Activated CD8-positive, alpha-beta T cell treated with anti-CD3 and anti-CD28 coated beads for 36 hours (primary cell): ENCODE measurements at regions of chr3 and their contacts with region 1.

Region 1: GRCh38 chr3:66822186-66823008 is 175.7 kb upstream of the KBTBD8 start:
- DNase-seq: peak; percentile 73
- ATAC-seq: peak; percentile 77
- H3K4me3 Mint-ChIP-seq: no peak overlapping the region
- H3K27ac Mint-ChIP-seq: no peak overlapping the region
- H3K4me1 Mint-ChIP-seq: no peaks in the 10 kb centered on the region
- H3K27me3 Mint-ChIP-seq: no peaks in the 10 kb centered on the region
- CTCF ChIP-seq: peak; percentile 68

Region 2: DNA sequence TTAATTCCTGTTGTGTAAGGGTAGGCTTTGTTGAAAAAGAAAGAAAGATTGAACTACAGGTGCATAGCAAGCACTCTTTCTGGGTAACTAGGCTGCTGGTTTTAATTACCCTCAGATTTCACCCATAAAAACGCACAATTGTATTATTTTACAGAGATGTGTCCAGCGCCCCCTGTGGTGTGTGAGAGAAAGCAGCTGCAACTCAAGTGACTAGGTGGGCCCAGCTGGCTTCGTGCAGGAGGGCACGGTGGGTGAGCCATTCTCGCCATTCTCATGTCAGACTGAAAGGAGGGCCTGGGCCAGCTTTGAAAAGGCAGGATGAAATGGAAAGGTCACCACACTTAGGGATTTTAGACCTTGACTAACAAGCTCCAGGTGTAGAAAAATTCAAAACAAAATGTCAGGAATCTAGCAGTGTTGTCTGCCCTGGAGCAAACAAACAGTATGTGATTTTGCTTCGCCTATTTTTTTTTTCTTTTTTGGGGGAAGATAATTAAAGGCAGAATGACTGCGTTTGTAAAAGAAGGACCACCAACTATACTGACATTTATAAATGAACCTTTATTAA is 444.1 kb before region 1 on chr3:
- CTCF ChIA-PET with region 1: interaction called, 10 read pairs
- POLR2A ChIA-PET with region 1: no interaction called
- intact Hi-C with region 1: no loop called
- DNase-seq: peak; percentile 60
- ATAC-seq: peak; percentile 68
- H3K4me3 Mint-ChIP-seq: no peak overlapping the region
- H3K27ac Mint-ChIP-seq: peak overlapping the region; percentile 82
- H3K4me1 Mint-ChIP-seq: peaks cover 13% of the 10 kb centered on the region
- H3K27me3 Mint-ChIP-seq: no peaks in the 10 kb centered on the region
- CTCF ChIP-seq: peak; percentile 46

Region 3: DNA sequence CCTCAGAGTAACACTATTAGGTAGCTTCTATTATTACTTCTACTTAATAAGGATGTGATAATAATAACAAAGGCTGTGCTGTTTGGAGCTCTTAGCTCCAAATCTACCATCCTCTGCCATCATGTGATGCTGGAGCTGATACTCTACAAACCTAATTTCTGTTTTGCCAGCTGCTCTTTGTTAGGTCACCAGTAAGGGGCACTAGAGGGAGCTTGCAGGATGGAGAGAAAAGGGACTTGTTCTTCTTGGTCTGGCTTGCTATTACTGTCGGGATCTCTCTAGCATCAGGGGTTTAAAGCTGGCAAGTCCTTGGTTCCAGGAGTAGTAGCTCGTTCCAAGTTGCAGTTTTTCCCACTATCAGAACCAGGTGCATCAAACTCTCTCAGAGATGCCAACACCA is 19.2 kb before region 1 on chr3:
- CTCF ChIA-PET with region 1: interaction called, 26 read pairs
- POLR2A ChIA-PET with region 1: no interaction called
- intact Hi-C with region 1: no loop called
- DNase-seq: no peak
- ATAC-seq: no peak
- H3K4me3 Mint-ChIP-seq: no peak overlapping the region
- H3K27ac Mint-ChIP-seq: no peak overlapping the region
- H3K4me1 Mint-ChIP-seq: peaks cover 7% of the 10 kb centered on the region
- H3K27me3 Mint-ChIP-seq: peaks cover 13% of the 10 kb centered on the region
- CTCF ChIP-seq: no peak

Region 4: GRCh38 chr3:66809595-66809958 is 12.8 kb before region 1 on chr3:
- CTCF ChIA-PET with region 1: interaction called, 26 read pairs
- POLR2A ChIA-PET with region 1: no interaction called
- intact Hi-C with region 1: no loop called
- DNase-seq: peak; percentile 4
- ATAC-seq: no peak
- H3K4me3 Mint-ChIP-seq: no peak overlapping the region
- H3K27ac Mint-ChIP-seq: no peak overlapping the region
- H3K4me1 Mint-ChIP-seq: no peaks in the 10 kb centered on the region
- H3K27me3 Mint-ChIP-seq: no peaks in the 10 kb centered on the region
- CTCF ChIP-seq: no peak